AG04449 (cell line): ENCODE measurements at regions of chr15 and their contacts with region 1.

Region 1: GRCh38 chr15:59688841-59689625 is at the start of gene BNIP2:
- DNase-seq: peak; percentile 83
- H3K4me3 ChIP-seq: peak within 1 kb of the TSS; percentile 96
- CTCF ChIP-seq: no peak

Region 2: DNA sequence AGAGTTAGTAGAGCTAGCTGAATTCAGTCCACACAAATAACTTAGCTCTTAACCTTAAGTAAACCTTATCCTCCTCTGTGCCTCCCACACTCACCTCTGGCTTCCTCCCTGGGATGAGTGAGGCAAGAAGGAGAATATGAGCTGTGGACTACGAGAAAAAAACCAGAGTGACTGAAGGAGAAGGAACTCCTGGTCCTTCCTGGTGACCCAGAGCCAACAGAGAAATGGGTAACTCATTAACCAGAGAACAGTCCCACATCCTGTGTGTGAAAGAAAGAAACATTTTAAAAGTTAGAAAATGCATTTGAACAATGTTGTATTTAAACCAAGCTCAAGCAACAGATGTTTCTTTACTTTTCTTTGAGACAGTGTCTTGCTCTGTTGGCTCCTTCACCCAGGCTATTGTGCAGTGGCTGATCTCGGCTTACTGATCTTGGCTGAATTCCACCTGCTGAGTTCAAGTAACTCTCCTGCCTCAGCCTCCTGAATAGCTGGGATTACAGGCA is 278.6 kb before region 1 on chr15:
- CTCF ChIA-PET with region 1: no interaction called
- POLR2A ChIA-PET with region 1: no interaction called
- DNase-seq: no peak
- H3K4me3 ChIP-seq: no peak overlapping the region
- CTCF ChIP-seq: no peak

Region 3: GRCh38 chr15:59699810-59700431 is 10.9 kb after region 1 on chr15:
- CTCF ChIA-PET with region 1: interaction called, 14 read pairs
- POLR2A ChIA-PET with region 1: no interaction called
- DNase-seq: no peak
- H3K4me3 ChIP-seq: no peak overlapping the region
- CTCF ChIP-seq: no peak

Region 4: DNA sequence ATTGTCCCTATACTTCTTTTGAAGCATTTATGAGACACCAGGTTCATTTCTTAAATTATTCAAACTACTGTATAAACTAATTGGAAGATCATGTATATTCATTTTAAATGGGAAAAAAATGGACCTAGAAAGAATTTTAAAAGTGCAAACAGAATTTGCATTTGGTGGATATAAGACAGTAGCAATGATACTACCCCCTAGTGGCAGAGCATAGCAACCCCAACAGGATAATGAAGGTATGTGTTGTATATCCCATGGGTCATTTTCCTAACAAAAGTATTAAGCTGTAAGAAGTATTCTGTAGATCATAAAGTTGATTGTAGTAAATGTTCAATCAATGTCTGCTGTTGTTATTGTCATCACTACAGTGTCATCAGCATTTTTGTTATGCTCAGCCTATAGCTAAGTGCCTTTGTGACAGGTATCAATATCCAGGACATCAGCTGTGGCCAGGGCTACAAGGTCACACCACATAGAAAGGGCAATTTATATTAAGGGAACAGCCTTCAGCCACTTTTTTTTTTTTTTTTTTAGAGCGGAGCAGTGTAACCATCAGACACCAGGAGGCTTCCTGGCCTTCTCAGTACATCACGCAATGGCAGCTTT is 490.9 kb after region 1 on chr15:
- CTCF ChIA-PET with region 1: interaction called, 34 read pairs
- POLR2A ChIA-PET with region 1: no interaction called
- DNase-seq: peak; percentile 9
- H3K4me3 ChIP-seq: no peak overlapping the region
- CTCF ChIP-seq: peak; percentile 68

Region 5: GRCh38 chr15:60315878-60316277 is 626.8 kb after region 1 on chr15:
- CTCF ChIA-PET with region 1: interaction called, 329 read pairs
- POLR2A ChIA-PET with region 1: no interaction called
- DNase-seq: no peak
- H3K4me3 ChIP-seq: no peak overlapping the region
- CTCF ChIP-seq: no peak

Region 6: DNA sequence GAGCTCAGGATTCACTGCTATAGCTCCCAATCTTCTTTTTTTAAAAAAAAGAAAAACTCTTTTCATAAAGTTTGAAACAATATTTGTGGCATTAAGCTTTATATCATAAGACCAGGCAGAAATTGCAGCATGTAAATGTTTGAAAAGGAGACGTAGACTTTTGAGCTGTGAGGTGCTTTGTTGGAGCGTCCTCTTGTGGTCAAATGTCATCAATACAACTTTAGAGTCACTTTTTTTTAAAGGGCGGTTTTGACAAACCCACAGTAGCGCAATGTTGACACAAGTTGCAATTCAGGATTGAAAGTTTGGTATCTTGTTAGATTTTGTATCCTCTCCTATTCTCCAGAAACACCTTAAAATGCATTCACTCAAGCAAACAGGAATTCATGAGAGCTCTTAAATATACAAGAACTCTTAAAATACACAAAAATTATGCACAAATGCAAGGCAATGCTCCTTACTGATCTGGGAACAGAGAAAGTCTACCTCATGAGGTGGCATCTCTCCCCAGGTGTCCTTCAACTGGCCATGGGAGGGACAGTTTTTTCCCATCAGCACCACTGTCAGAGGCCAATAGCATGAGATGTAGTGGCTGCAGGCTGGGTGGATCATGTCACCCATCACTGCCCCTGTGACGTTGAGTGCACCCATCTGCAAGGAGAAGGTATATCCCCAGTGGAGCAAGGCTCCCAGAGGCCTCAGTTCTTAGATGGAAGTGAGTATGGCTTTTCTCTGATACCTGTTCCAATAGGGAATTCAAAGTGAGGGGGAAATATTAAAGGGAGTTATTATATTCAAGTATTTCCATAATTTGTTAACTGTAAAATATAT is 638.0 kb after region 1 on chr15:
- CTCF ChIA-PET with region 1: interaction called, 329 read pairs
- POLR2A ChIA-PET with region 1: no interaction called
- DNase-seq: no peak
- H3K4me3 ChIP-seq: no peak overlapping the region
- CTCF ChIP-seq: peak; percentile 69